ENCODE measurements at regions of chr7 and their contacts with region 1.

Region 1: GRCh38 chr7:7566651-7567611 is at the start of gene MIOS:
- DNase-seq: peak; percentile 80
- H3K4me3 Mint-ChIP-seq: peak within 1 kb of the TSS; percentile 88
- H3K27ac Mint-ChIP-seq: peak within 1 kb of the TSS; percentile 73
- H3K4me1 Mint-ChIP-seq: peaks cover 35% of the 10 kb centered on the region
- H3K27me3 Mint-ChIP-seq: no peaks in the 10 kb centered on the region
- total RNA-seq, gene MIOS: 29.6 and 31.6 TPM in 2 replicates

Region 2: DNA sequence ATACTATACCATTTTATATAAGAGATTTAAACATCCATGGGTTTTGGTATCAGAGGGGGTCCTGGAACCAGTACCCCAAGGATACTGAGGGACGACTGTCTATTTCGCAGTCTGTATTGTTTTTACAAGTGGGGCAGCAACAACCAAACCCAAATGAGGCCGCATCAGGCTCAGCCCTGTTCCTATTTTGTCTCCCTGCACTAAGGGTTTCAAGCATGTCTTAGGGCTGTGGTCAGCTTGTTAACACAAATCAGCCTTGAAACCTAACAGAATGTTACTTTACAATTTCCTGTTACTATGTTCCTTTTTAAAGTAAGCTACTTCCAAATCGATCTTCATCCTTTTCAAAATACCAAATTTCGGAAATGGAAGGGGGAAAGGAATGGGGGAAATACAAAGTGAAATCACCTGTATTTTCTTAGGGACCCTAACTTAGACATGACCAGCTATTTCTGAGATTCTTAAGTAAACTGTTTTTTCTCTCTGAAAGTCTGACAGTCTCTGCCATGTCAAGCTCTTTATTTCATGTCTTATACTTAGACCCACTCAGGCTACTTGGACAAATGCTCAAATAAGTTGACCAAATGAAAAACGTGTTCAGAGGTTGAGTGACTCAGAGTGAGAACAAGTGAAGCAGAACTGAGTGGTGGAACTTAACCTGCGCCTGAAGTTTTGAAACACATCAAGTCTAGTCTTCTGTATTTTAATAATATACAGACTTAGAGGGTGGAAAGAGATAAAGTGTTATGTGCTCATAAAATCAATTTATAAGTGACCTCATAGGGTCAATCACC is 308.8 kb before region 1 on chr7:
- intact Hi-C with region 1: loop called (anchors 2 kb)
- DNase-seq: no peak
- H3K4me3 Mint-ChIP-seq: peak overlapping the region; percentile 55
- H3K27ac Mint-ChIP-seq: peak overlapping the region; percentile 82
- H3K4me1 Mint-ChIP-seq: peaks cover 49% of the 10 kb centered on the region
- H3K27me3 Mint-ChIP-seq: no peaks in the 10 kb centered on the region

Region 3: GRCh38 chr7:7375538-7375937 is 191.4 kb before region 1 on chr7:
- intact Hi-C with region 1: no loop called
- DNase-seq: no peak
- H3K4me3 Mint-ChIP-seq: no peak overlapping the region
- H3K27ac Mint-ChIP-seq: no peak overlapping the region
- H3K4me1 Mint-ChIP-seq: no peaks in the 10 kb centered on the region
- H3K27me3 Mint-ChIP-seq: peaks cover 3% of the 10 kb centered on the region

Region 4: GRCh38 chr7:7585253-7585928 is 18.5 kb after region 1 on chr7:
- intact Hi-C with region 1: loop called (anchors 2 kb)
- DNase-seq: no peak
- H3K4me3 Mint-ChIP-seq: no peak overlapping the region
- H3K27ac Mint-ChIP-seq: no peak overlapping the region
- H3K4me1 Mint-ChIP-seq: no peaks in the 10 kb centered on the region
- H3K27me3 Mint-ChIP-seq: no peaks in the 10 kb centered on the region

Region 5: DNA sequence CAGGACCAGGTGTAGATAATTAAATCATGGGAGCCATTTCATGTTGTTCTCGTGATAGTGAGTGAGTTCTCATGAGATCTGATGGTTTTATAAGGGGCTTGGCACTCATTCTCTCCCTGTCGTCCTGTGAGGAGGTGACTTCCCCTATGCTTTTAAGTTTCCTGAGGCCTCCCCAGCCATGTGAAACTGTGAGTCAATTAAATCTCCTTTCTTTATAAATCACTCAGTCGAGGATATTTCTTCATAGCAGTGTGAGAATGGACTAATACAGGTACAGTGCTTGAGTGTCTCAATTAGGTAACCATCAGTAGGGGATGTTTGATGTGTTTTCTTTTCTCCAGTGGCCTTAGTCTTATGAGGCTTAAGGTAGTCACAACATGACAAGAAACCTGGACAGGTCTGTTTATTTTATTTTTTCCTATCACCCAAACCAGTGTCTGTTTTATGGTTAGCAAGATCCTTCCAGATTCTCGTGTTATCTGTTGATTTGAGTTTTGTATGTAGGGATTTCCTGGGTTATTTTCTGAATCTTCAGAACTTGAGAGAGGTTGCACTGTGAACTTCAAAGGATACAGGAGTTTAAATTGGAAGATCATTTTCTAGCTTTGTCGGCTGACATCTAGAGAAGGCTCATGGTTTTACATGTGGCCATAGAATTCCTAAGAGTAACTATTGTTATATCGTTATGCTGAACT is 105.8 kb after region 1 on chr7:
- intact Hi-C with region 1: loop called (anchors 10 kb)
- DNase-seq: no peak
- H3K4me3 Mint-ChIP-seq: peak overlapping the region; percentile 46
- H3K27ac Mint-ChIP-seq: peak overlapping the region; percentile 64
- H3K4me1 Mint-ChIP-seq: peaks cover 28% of the 10 kb centered on the region
- H3K27me3 Mint-ChIP-seq: no peaks in the 10 kb centered on the region

Region 6: DNA sequence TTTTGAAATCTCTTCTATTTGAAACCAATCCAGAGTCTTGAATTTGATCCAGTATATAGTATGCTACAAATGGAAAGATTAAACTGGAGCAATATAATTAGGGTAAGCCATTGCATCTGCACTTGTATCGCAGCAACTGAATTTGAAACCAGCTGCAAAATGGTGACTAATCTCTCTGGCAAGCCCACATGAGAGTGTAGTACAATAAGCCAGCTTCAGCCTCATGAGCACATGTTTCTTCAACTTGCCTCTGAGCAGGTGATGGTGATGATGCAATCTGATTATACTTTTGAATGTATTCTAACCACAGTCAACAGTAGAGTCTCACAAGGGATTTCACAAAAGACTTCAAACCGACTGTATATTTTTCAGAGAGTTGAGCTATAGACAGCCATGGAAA is 152.3 kb after region 1 on chr7:
- intact Hi-C with region 1: loop called (anchors 5 kb)
- DNase-seq: peak; percentile 50
- H3K4me3 Mint-ChIP-seq: peak overlapping the region; percentile 56
- H3K27ac Mint-ChIP-seq: peak overlapping the region; percentile 80
- H3K4me1 Mint-ChIP-seq: peaks cover 27% of the 10 kb centered on the region
- H3K27me3 Mint-ChIP-seq: peaks cover 2% of the 10 kb centered on the region

Region 7: GRCh38 chr7:8197994-8198698 is 631.2 kb after region 1 on chr7:
- intact Hi-C with region 1: loop called (anchors 5 kb)
- DNase-seq: peak; percentile 51
- H3K4me3 Mint-ChIP-seq: peak overlapping the region; percentile 0
- H3K27ac Mint-ChIP-seq: peak overlapping the region; percentile 11
- H3K4me1 Mint-ChIP-seq: peaks cover 66% of the 10 kb centered on the region
- H3K27me3 Mint-ChIP-seq: peaks cover 14% of the 10 kb centered on the region

Measured in activated T-helper 1 cell treated with anti-CD3 and anti-CD28 coated beads, Interleukin-12 subunit alpha, Interleukin-12 subunit beta, Interleukin-2, Interleukin-4 antibody, amounts not matched to agents 30 ng/mL and 10 ng/mL and 1 ng/mL, durations not matched to agents 14 hours and 24 hours and 36 hours (primary cell).